A549 (cell line): ENCODE measurements at regions of chr3 and their contacts with region 1.

Region 1: DNA sequence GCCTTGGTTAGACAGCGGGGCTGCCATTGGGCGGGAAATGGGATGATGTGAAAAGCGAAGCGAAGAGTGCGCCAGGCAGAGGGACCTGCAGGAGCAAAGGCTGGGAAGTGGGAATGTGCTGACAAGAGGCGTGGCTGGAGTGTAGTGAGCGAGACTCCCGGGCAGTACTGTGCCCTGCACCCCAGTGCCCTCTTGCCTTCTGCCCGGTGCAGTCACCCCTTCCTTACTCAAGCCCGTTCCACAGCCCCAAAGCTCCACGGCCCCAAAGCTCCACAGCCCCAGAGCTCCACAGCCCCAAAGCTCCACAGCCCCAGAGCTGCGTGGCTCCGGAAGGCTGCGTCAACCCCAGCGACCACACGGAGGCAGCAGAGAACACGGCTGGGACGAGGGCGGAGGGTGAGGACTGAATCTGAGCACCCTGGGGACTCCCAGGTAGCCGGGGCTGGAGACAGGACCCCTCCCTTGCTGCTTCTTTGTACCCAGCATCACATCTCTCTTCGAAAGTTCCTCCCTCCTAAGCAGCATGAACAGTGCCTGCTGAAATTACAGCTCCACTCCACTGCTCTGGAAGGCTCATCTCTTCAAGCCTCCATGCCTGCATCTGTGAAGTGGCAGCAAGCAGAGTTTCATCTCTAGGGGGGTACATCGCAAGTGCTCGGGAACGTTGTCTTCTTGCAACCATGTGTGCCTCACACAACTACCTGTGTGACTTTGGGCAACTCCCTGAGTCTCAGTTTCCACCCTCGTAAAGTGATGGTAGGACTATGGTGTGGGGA is 108.9 kb downstream of the FBLN2 start:
- DNase-seq: peak; percentile 45 to 95
- ATAC-seq: peak; percentile 82 to 94
- H3K4me3 ChIP-seq: no peak overlapping the region
- H3K27ac ChIP-seq: no peak overlapping the region
- H3K4me1 ChIP-seq: peaks cover 4% of the 10 kb centered on the region; the same call in 1 of the 3 replicates
- CTCF ChIP-seq: peak; percentile 70
- EP300 ChIP-seq: no peak
- POLR2A ChIP-seq: no peak
- RAD21 ChIP-seq: peak; percentile 79 to 87

Region 2: GRCh38 chr3:13588221-13588701 is 69.6 kb before region 1 on chr3:
- CTCF ChIA-PET with region 1: no interaction called
- POLR2A ChIA-PET with region 1: no interaction called
- DNase-seq: no peak
- ATAC-seq: no peak
- H3K4me3 ChIP-seq: no peak overlapping the region
- H3K27ac ChIP-seq: no peak overlapping the region
- H3K4me1 ChIP-seq: no peaks in the 10 kb centered on the region
- CTCF ChIP-seq: no peak
- EP300 ChIP-seq: no peak
- POLR2A ChIP-seq: no peak
- RAD21 ChIP-seq: no peak

Region 3: DNA sequence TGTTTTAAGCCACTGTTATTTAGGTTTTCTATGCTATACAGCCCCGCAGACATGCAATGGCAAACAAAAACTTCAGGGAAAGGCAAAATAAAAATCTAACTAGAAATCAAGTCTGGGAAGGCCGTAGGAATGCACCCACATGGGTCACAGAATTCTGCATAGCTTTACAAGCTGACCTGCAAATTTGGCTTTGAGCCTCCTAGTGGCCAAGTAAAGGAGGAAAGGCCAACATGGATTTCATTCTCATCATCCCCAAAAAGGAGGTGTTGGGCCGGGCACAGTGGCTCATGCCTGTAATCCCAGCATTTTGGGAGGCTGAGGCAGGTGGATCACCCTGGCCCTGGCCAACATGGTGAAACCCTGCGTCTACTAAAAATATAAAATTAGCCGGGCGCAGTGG is 15.4 kb after region 1 on chr3:
- CTCF ChIA-PET with region 1: interaction called, 56 read pairs
- POLR2A ChIA-PET with region 1: no interaction called
- DNase-seq: peak in 1 of 2 experiments; percentile 50
- ATAC-seq: peak in 1 of 2 experiments; percentile 62; a peak in 3 of 6 replicates
- H3K4me3 ChIP-seq: no peak overlapping the region
- H3K27ac ChIP-seq: no peak overlapping the region
- H3K4me1 ChIP-seq: no peaks in the 10 kb centered on the region
- CTCF ChIP-seq: 0 out of 3 replicates have a peak, but pooled peaks have one; percentile 8
- EP300 ChIP-seq: no peak
- POLR2A ChIP-seq: no peak
- RAD21 ChIP-seq: no peak

Region 4: GRCh38 chr3:13872451-13872850 is 214.6 kb after region 1 on chr3:
- CTCF ChIA-PET with region 1: interaction called, 11 read pairs
- POLR2A ChIA-PET with region 1: no interaction called
- DNase-seq: no peak
- ATAC-seq: no peak
- H3K4me3 ChIP-seq: no peak overlapping the region
- H3K27ac ChIP-seq: no peak overlapping the region
- H3K4me1 ChIP-seq: no peaks in the 10 kb centered on the region
- CTCF ChIP-seq: no peak
- EP300 ChIP-seq: no peak
- POLR2A ChIP-seq: no peak
- RAD21 ChIP-seq: no peak

Region 5: DNA sequence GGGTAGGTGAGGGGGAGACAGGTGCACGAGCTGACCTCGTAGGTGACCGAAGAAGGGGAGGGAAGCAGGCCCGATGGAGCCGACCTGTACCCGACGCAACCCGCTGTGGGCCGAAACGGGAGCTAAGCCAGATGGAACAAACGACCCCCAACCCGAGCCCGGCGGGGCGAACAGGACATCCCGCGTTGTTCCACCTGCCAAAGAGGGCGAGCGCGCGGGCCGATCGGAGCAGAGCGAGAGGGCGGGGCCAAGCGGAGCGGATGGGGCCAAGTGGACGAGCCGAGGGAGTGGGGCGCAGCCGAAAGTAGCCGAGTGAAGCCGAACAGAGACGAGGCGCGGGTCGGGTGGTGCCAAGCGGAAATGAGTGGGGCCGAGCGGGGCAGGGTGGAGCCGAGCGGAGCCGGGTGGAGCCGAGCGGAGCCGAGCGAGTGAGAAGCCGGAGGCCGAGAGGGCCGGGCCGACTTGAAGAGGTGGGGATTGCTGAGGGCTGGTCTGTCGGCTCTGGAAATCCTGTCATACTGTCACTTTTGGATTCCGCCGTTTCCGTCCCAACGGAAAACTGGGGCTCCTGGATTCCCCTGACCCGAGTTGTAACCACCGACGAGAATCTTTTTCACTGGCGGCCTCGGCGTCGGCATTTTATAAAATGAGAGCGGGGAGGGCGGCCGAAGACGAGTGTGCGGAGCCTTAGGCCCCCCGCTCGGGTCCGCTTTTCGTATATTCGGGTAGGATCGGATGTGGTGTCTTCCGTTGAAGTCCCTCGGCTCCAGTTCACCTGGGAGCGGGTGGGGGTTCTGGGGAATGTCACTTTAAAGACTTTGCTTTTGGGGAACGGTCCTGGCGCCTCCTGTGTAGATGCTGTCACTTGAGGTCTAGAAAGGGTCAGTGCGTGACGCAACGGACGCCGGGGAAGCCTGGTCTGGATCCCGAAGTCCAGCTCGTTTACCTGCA is 237.6 kb after region 1 on chr3:
- CTCF ChIA-PET with region 1: interaction called, 10 read pairs
- POLR2A ChIA-PET with region 1: no interaction called
- DNase-seq: peak; percentile 74 to 82
- ATAC-seq: peak; percentile 97 to 99
- H3K4me3 ChIP-seq: peak overlapping the region; percentile 60
- H3K27ac ChIP-seq: peak overlapping the region; percentile 72 to 83
- H3K4me1 ChIP-seq: peaks cover 5% of the 10 kb centered on the region; the same call in 1 of the 3 replicates
- CTCF ChIP-seq: no peak
- EP300 ChIP-seq: no peak
- POLR2A ChIP-seq: no peak
- RAD21 ChIP-seq: no peak